Mammary epithelial cell (primary cell): ENCODE measurements at regions of chr6 and their contacts with region 1.

Region 1: DNA sequence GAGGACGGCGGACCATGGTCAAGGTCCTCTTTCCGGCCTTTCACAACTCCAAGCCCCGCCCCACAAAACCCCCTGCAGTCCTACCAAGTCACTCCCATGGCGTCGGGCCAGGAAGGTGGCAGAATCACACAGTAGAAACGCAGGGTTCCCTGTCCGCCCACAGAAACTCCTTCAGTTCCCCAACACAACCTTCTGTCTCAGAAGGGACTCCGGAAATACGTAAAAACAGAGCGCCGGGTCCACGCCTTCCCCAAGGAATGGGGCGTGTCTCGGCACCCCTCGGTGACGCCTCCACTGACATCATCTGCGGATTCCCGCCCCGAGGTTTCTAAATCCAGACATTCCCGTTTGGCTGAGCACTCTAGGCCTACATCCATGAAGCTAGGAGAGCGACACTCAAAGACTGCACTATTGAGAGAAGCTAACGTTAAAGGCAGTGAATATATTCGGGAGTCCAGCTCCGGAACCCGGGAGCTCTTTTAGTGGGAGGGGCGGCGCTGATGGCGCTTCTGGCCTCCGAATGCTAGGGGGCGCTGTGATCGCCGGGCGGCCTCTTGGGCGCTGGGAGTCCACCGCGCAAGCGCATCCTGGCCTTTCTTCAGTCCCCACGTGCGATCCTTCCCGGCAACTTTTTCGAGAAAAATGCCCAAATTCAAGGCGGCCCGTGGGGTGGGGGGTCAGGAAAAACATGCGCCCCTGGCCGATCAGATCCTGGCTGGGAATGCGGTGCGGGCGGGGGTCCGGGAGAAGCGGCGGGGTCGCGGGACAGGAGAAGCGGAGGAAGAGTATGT is at the starts of genes BYSL and MED20:
- DNase-seq: peak; percentile 98
- H3K4me3 ChIP-seq: peak within 1 kb of the TSS; percentile 75 to 92 (median 87)
- H3K27ac ChIP-seq: peak within 1 kb of the TSS; percentile 100
- H3K4me1 ChIP-seq: peaks cover 34% of the 10 kb centered on the region
- H3K27me3 ChIP-seq: no peaks in the 10 kb centered on the region
- CTCF ChIP-seq: peak; percentile 87 to 96
- total RNA-seq, gene BYSL: 14.2 to 52.5 TPM
- total RNA-seq, gene MED20: 22.4 to 23.7 TPM

Region 2: DNA sequence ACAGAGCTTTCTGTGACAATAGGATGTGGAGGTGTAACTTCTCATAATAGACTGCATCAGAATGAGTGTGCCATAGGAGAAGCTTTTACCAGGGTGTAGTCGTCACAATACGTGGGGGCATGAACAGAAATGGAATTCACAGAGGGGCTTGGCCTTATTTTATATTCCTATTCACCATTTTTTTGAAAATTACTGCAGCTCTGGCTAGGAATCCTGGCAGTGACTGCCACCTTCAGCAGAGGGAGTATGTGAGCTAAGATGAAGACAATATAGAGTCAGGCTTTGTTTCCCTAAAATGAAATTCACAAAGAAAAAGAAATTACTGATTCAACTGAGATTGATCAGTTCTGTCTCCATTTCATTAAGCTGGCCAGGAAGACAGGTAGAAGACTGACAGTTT is 119.7 kb before region 1 on chr6:
- CTCF ChIA-PET with region 1: interaction called, 5 read pairs
- dilution Hi-C with region 1: no loop called
- in situ Hi-C with region 1: no loop called
- intact Hi-C with region 1: loop called (anchors 5 kb)
- DNase-seq: no peak
- H3K4me3 ChIP-seq: no peak overlapping the region
- H3K27ac ChIP-seq: no peak overlapping the region
- H3K4me1 ChIP-seq: no peaks in the 10 kb centered on the region
- H3K27me3 ChIP-seq: no peaks in the 10 kb centered on the region
- CTCF ChIP-seq: peak; percentile 65 to 70

Region 3: GRCh38 chr6:41846666-41847237 is 74.4 kb before region 1 on chr6:
- CTCF ChIA-PET with region 1: no interaction called
- dilution Hi-C with region 1: no loop called
- in situ Hi-C with region 1: no loop called
- intact Hi-C with region 1: loop called (anchors 1 kb)
- DNase-seq: peak; percentile 98
- H3K4me3 ChIP-seq: peak overlapping the region in 1 of 3 experiments; percentile 1
- H3K27ac ChIP-seq: peak overlapping the region; percentile 74
- H3K4me1 ChIP-seq: peaks cover 13% of the 10 kb centered on the region
- H3K27me3 ChIP-seq: no peaks in the 10 kb centered on the region
- CTCF ChIP-seq: peak; percentile 92 to 93

Region 4: GRCh38 chr6:41895300-41896233 is 25.5 kb before region 1 on chr6 and contains the start of gene USP49:
- CTCF ChIA-PET with region 1: no interaction called
- dilution Hi-C with region 1: no loop called
- in situ Hi-C with region 1: no loop called
- intact Hi-C with region 1: loop called (anchors 1 kb)
- DNase-seq: peak; percentile 79
- H3K4me3 ChIP-seq: peak within 1 kb of the TSS; percentile 86 to 96 (median 92)
- H3K27ac ChIP-seq: peak within 1 kb of the TSS; percentile 82
- H3K4me1 ChIP-seq: peaks cover 16% of the 10 kb centered on the region
- H3K27me3 ChIP-seq: no peaks in the 10 kb centered on the region
- CTCF ChIP-seq: no peak
- total RNA-seq, gene USP49: 3.6 to 3.7 TPM

Region 5: GRCh38 chr6:41901882-41902519 is 19.1 kb before region 1 on chr6:
- CTCF ChIA-PET with region 1: interaction called, 26 read pairs
- dilution Hi-C with region 1: no loop called
- in situ Hi-C with region 1: no loop called
- intact Hi-C with region 1: no loop called
- DNase-seq: no peak
- H3K4me3 ChIP-seq: no peak overlapping the region
- H3K27ac ChIP-seq: no peak overlapping the region
- H3K4me1 ChIP-seq: no peaks in the 10 kb centered on the region
- H3K27me3 ChIP-seq: no peaks in the 10 kb centered on the region
- CTCF ChIP-seq: peak; percentile 32 to 43

Region 6: DNA sequence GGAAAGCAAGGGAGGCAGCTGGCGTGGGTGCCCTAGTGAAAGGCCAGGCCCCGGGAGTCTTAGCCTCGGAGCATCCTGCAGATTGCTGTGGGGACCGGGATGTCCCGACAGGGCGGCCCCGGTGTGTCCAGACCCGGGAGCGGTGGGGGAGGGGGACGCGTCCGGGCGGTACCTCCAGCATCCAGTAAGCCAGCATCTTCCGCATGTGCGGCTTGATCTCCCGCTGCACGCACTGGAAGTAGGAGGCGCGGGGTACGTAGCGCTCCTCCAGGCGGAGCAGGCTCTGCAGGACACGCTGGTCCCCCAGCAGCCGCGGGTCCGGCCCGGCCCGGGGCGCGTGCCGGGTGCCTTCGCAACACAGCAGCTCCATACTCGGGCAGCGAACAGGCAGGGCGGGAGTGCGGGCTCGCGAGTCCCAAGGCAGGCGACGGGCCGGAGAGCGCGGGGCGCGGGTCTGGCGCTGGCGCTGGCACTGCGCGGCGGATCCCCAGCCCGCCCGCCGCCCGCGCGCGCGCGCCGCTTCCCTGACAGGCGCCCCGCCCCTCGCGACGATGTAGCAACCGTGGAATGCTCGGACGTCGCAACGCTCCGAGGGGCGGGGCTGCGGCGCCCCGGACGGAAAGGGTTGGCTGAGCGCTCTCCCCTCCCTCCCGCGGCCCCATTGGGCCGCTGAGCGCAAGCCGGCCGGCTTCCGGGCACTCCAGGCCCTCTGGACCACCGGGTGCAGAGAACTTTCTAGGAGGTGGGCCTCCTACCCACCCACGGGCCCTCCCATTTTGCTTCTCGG is 20.4 kb after region 1 on chr6 and contains the start of gene CCND3:
- CTCF ChIA-PET with region 1: interaction called, 10 read pairs
- dilution Hi-C with region 1: no loop called
- in situ Hi-C with region 1: no loop called
- intact Hi-C with region 1: loop called (anchors 1 kb)
- DNase-seq: peak; percentile 90
- H3K4me3 ChIP-seq: peak within 1 kb of the TSS; percentile 82 to 95 (median 84)
- H3K27ac ChIP-seq: peak within 1 kb of the TSS; percentile 37
- H3K4me1 ChIP-seq: peaks cover 32% of the 10 kb centered on the region
- H3K27me3 ChIP-seq: no peaks in the 10 kb centered on the region
- CTCF ChIP-seq: no peak
- total RNA-seq, gene CCND3: 45.7 to 80.3 TPM